ENCODE measurements at regions of chr4 and their contacts with region 1.

Region 1: DNA sequence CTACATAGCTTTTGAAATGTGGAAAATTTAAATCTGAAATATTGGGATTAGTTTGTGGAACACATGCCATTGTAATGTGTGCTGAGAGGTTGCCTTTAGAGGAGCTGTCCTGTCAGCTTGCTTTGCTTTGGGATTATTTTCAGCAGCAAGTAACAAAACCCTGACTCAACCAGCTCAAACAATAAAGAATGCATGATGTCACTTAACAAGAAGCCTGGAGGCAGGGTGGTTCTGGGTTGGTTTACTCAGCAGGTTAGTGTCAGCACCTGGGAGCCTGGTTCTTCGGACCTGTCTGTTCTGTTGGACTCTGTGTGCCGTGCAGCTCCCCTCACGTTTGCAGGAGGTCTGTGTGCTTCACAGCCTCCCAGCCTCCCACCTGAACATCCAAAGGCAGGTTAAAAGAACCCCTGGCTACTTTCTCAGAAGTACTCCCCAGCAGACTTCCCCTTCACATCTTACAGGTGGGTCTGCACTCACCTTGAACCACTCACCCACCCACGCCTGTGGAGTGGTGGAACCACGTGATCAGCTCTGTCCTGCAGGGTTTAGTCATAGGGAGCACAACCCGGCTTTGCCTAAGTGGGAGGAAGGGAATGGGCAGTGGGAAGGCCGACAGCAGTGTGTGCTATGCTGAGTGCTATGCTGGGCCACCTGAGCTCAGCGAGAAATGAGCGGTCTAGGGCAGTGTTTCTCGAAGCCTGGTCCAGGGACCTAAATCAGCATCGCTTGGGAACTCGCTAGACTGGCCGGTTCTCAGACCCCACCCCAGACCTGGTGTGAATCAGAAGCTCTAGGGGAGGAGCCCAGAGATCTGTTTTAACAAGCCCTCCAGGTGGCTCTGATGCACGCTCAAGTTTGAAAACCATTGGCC is 20.4 kb downstream of the TMEM131L start:
- DNase-seq: peak; percentile 71 to 77
- H3K4me3 ChIP-seq: no peak overlapping the region
- H3K4me3 Mint-ChIP-seq: peak overlapping the region; percentile 47
- H3K27ac Mint-ChIP-seq: peak overlapping the region; percentile 73
- H3K4me1 ChIP-seq: peaks cover 32% of the 10 kb centered on the region
- H3K4me1 Mint-ChIP-seq: peaks cover 25% of the 10 kb centered on the region
- H3K27me3 ChIP-seq: no peaks in the 10 kb centered on the region
- H3K27me3 Mint-ChIP-seq: no peaks in the 10 kb centered on the region
- CTCF ChIP-seq: no peak

Region 2: DNA sequence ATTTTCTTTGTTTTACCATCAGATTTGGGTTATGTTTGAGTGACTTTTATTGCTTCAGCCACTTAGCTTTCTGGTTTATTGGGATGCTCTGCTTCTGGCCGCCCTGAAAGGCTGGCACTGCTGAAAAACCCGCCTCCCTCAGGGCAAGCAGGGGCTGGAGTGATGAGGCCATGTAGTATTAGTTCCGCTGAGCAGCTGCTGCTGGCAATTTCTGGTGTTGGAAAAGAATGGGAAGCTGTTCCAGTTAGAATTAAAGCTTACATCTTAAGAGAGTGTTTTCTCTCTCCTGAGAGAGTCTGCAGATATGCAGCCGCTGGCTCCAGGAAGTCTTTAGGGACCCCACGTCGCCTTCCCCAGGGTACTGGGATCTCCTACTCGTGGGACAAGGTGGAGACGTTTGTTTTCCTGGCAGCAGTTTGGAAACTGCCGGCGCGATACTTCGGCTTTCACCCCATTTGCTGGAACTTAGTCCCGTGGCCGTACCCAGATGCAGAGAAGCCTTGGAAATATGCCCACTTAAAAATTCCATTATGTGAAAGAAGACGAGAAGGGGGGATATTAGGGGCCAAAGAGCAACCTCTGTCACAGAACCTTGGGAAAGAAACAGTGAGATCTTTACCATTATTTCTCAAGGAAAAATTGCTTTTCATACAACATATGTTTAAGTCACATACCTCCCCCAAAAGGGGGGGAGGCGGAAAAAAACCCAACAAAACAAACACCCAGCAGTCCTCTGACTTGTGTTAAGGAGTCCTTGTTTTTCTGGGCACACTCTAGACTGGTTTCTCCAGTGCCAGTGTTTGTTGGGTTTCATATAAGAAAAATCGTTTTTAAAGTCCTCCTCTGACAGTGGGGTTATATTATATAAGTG is 52.2 kb after region 1 on chr4:
- CTCF ChIA-PET with region 1: no interaction called
- POLR2A ChIA-PET with region 1: no interaction called
- intact Hi-C with region 1: loop called (anchors 2 kb)
- DNase-seq: no peak
- H3K4me3 ChIP-seq: no peak overlapping the region
- H3K4me3 Mint-ChIP-seq: no peak overlapping the region
- H3K27ac Mint-ChIP-seq: no peak overlapping the region
- H3K4me1 ChIP-seq: peaks cover 14% of the 10 kb centered on the region
- H3K4me1 Mint-ChIP-seq: peaks cover 6% of the 10 kb centered on the region
- H3K27me3 ChIP-seq: no peaks in the 10 kb centered on the region
- H3K27me3 Mint-ChIP-seq: no peaks in the 10 kb centered on the region
- CTCF ChIP-seq: no peak

Measured in Caco-2 (cell line).